ENCODE measurements at regions of chr17 and their contacts with region 1.

Region 1: GRCh38 chr17:35764123-35764991 is 3.7 kb downstream of the C17orf50 start:
- DNase-seq: peak; percentile 95
- CTCF ChIP-seq: peak; percentile 97

Region 2: GRCh38 chr17:35674552-35674951 is 89.8 kb before region 1 on chr17:
- CTCF ChIA-PET with region 1: no interaction called
- POLR2A ChIA-PET with region 1: no interaction called
- DNase-seq: no peak
- CTCF ChIP-seq: no peak

Region 3: GRCh38 chr17:35726127-35726952 is 38.0 kb before region 1 on chr17:
- CTCF ChIA-PET with region 1: interaction called, 15 read pairs
- POLR2A ChIA-PET with region 1: no interaction called
- DNase-seq: no peak
- CTCF ChIP-seq: no peak

Region 4: DNA sequence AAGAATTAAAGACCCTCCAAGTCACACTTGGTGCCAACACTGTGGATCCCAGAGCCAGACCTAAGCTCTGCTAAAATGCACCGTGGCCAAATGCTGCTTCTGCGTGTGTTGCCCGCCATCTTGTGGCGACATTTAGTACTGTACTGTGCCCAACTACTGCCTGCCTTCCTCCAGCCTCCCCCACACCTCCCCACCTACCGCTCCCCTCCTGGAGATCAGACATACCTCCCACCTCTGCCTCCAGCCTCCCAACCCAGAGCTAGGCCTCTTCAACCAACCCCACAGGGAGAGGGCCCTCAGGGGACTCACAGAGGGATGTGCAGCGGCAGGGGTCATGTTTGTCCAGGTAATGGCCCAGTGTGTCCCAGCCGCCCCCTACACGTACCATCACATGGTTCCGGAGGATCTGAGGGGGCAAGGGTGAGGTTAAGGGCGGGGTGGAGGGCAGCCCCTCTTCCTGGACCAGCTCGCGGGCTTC is 16.8 kb before region 1 on chr17:
- CTCF ChIA-PET with region 1: interaction called, 65 read pairs
- POLR2A ChIA-PET with region 1: no interaction called
- DNase-seq: peak; percentile 88
- CTCF ChIP-seq: peak; percentile 85

Region 5: DNA sequence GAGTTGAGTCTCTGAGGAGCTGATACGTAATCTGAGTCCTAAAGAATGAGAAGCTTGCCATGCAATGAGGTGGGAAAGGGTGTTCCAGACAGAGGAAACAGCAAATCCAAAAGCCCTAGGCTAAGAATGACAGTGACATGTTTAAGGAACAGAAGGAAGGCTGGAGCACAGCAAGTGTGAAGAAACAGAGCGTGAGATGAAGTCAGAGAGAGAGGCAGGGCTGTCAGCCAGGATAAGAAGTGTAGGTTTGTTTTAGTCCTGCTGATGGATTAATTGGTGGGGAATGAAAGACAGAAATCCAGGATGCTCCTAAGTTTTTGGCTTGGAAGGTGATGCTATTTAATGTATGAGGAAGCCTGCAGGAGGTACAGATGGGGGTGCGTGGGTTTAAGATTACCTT is 16.6 kb after region 1 on chr17:
- CTCF ChIA-PET with region 1: interaction called, 18 read pairs
- POLR2A ChIA-PET with region 1: no interaction called
- DNase-seq: no peak
- CTCF ChIP-seq: no peak

Region 6: GRCh38 chr17:35794988-35795824 is 30.8 kb after region 1 on chr17 and contains the start of gene MMP28:
- CTCF ChIA-PET with region 1: interaction called, 19 read pairs
- POLR2A ChIA-PET with region 1: no interaction called
- DNase-seq: peak; percentile 46
- CTCF ChIP-seq: no peak

Region 7: DNA sequence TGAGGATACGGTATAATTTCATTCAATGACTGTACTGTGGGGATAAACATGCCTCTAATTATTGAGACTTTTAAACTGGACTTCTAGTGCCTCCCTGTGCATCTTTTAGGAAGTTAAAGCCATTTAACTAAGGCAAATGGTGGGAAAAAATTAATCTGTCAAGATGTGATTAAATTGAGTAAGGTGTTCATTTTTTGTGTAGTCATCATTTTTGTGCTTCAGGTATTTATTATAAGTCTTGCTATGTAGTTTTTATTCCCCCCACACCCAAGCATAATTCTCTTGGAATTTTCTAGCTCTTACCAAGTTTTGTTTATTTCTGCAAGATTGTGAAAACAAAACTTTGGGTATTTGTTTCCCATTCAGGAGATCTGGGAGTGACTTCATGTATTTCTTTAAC is 55.1 kb after region 1 on chr17:
- CTCF ChIA-PET with region 1: interaction called, 14 read pairs
- POLR2A ChIA-PET with region 1: no interaction called
- DNase-seq: no peak
- CTCF ChIP-seq: no peak

Measured in GM10248 (cell line).